Gastrocnemius medialis (tissue), 4 donors: ENCODE measurements at regions of chr15 and their contacts with region 1.

Region 1: DNA sequence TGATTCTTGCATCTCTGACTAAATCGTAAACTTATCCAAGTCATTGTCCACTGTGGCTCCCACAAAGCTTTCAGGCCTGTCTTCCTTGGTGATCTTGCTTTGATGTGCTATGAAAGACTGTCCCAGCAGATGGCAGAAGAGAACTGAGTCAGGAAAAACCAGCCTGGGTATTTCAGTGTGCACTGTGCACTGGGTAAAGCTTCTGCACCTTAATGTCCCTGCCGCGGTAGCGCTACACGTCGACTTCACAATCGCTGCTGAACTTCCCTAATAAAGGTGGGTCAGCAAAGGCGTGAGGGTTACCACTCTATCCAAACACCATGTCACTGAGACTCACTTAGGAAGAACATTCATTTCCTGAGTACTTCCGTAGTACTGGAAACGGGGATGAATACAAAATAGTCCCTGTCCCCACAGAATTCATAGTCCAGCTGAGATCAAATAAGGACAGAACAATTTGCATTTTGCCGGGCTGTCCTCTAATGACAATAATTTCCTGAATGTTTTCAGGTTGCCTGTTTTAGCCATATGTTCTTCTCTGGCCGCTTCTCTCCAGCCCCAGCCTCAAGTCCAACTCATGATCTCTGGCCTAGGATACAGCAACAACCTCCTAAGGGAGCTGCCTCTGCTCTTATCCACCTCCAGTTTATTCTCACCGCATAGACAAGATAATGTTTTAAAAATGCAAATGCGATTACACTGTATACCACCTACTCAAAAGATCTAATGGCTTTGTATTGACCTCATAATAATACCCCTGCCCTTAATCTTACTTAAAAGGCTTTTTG is 83.6 kb upstream of the AKAP13 start:
- DNase-seq: peak; percentile 20 to 55
- ATAC-seq: peak; percentile 97 to 99
- H3K4me3 ChIP-seq: peak overlapping the region; percentile 22 to 50 (median 36)
- H3K27ac ChIP-seq: peak overlapping the region in 1 of 4 donors; percentile 24
- H3K4me1 ChIP-seq: no peaks in the 10 kb centered on the region
- H3K27me3 ChIP-seq: no peaks in the 10 kb centered on the region
- CTCF ChIP-seq: peak; percentile 52 to 80 (median 68)
- POLR2A ChIP-seq: no peak

Region 2: GRCh38 chr15:85412956-85413854 is 116.4 kb after region 1 on chr15:
- in situ Hi-C with region 1: no loop called
- intact Hi-C with region 1: loop called (anchors 2 kb)
- DNase-seq: peak; percentile 22 to 50
- ATAC-seq: peak; percentile 68
- H3K4me3 ChIP-seq: peak overlapping the region in 2 of 4 donors; percentile 3 to 7
- H3K27ac ChIP-seq: peak overlapping the region; percentile 40 to 66 (median 58)
- H3K4me1 ChIP-seq: peaks cover 18 to 30% of the 10 kb centered on the region in 2 donors
- H3K27me3 ChIP-seq: no peaks in the 10 kb centered on the region
- CTCF ChIP-seq: no peak
- POLR2A ChIP-seq: no peak

Region 3: GRCh38 chr15:85421116-85421925 is 124.5 kb after region 1 on chr15:
- in situ Hi-C with region 1: loop called in 1 of 4 experiments (anchors 10 kb)
- intact Hi-C with region 1: no loop called
- DNase-seq: no peak
- ATAC-seq: no peak
- H3K4me3 ChIP-seq: no peak overlapping the region
- H3K27ac ChIP-seq: no peak overlapping the region
- H3K4me1 ChIP-seq: peaks cover 13 to 16% of the 10 kb centered on the region in 2 donors
- H3K27me3 ChIP-seq: no peaks in the 10 kb centered on the region
- CTCF ChIP-seq: no peak
- POLR2A ChIP-seq: no peak

Region 4: DNA sequence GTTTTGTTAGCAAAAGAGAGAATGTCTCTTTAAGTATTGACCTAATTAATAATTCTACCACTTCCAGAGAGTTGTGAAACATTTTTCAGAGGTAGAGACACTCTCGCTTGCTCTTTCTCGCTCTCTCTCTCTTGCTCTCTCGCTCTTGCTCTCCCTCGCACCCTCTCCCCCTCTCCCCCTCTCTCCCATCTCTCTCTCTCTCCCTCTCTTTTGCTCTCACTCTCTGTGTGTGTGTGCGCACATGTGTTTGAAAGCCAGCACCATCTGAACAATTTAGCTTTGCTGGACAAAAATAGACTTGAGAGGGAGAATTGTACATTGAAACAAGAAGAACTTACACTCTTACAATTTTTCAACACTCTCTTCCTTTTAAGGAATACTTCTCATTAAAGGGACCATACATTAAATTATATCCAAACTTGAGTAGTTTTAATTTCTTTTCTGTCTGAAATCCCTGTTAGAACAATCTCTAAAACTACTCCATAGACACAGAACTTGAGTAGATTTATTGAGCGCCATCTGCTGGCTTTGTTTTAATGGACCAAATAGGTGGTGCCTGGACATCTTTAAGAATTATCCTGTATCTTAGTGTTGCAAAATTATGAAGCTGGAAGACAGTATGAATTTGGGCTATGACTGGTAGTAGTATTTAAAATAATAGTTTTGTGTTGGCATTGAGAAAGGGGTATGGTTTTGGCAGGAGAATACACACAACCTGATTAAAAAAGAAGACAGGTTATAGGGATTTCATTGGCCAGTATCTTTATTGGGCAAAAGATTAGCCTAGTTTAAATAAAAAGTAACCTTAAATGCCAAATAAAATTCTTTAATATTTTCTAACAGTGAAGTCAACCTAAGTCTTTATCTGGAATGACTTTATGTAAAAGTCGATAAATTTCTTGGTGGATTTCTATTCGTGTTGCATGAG is 208.2 kb after region 1 on chr15:
- in situ Hi-C with region 1: no loop called
- intact Hi-C with region 1: loop called (anchors 10 kb)
- DNase-seq: peak; percentile 6 to 20
- ATAC-seq: peak in 1 of 2 donors; percentile 65
- H3K4me3 ChIP-seq: no peak overlapping the region
- H3K27ac ChIP-seq: peak overlapping the region; percentile 27 to 49 (median 29)
- H3K4me1 ChIP-seq: peaks cover 18 to 23% of the 10 kb centered on the region in 2 donors
- H3K27me3 ChIP-seq: no peaks in the 10 kb centered on the region
- CTCF ChIP-seq: peak in 3 of 5 experiments; percentile 40 to 58 (median 53)
- POLR2A ChIP-seq: no peak